ENCODE measurements at regions of chr10 and their contacts with region 1.

Region 1: DNA sequence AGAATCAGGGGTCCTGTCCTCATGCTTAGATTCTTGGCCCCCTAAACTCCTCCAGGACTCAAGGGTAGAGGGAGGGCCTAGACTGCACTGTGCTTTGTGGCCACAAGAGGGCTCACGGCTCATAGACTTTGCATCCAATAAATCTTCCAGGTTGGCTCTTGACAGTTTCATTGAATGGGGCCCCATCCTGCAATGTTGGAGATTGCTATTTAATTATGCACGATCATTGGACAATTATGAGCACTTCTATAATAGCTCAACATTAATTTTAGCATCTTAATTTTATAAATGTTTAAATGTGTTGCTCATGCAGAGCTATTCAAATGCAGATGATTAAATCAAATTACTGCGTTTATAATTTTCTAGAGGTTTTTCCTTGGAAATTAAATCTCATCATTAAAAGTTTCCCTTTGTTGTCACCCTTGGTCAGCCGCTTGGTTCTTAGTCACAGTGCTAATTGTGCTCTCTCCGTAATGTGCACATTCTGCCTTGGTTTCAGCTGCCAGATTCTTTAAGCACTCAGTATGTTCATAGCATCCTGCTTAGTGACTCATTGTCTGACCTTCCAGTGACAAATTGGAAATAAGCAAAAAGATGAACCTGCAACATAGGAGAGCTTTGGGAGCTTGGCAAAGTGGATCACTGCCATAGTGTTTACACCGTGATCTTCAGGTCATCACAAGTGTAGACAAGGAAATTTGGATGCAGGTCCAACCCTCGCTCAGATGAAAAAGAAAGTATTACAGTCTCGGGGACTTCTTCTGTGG is 33.4 kb upstream of the PLPP4 start:
- DNase-seq: no peak
- H3K4me3 ChIP-seq: no peak overlapping the region
- H3K27me3 ChIP-seq: no peaks in the 10 kb centered on the region
- CTCF ChIP-seq: peak; percentile 87

Region 2: DNA sequence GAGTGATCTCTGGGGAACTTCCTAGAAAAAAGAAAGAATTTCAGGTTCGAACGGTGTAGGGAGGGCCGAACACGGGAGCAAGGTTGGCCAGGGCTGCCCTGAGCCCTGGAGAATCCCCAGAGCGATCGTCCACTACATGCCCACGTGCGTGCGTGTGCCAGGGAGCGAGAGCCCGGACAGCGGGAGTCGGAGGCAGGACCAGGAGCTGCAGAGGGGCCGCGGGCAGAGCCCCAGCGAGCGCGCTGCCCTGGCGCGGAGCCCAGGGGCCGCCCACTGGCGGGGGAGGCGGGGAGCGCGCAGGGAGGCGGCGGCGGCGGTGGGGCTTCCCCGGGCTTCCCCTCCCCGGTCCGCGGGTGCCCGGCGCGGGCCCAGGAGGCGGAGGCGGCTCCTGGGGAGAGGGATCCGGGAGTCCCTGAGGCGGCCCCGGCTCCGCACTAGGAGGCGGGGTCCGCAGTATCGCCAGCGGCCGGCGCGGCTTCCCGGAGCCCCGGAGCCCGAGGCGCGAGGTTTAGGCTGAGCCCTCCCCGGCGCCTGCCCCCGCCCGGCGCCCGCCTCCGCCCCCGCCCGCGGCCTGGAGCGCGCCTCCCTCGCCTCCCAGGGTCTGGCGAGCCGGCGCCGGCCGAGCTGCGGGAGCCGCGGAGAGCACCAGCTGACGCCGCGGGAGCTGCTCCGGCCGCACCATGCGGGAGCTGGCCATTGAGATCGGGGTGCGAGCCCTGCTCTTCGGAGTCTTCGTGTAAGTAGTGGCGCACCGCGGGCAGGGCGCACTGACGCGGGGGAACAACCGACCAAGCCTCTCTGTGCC is 33.2 kb after region 1 on chr10 and contains the start of gene PLPP4:
- CTCF ChIA-PET with region 1: interaction called, 11 read pairs
- POLR2A ChIA-PET with region 1: no interaction called
- DNase-seq: no peak
- H3K4me3 ChIP-seq: peak within 1 kb of the TSS; percentile 53
- H3K27me3 ChIP-seq: no peaks in the 10 kb centered on the region
- CTCF ChIP-seq: no peak
- polyA plus RNA-seq, gene PLPP4: 30.1 and 35.4 TPM in 2 replicates

Region 3: DNA sequence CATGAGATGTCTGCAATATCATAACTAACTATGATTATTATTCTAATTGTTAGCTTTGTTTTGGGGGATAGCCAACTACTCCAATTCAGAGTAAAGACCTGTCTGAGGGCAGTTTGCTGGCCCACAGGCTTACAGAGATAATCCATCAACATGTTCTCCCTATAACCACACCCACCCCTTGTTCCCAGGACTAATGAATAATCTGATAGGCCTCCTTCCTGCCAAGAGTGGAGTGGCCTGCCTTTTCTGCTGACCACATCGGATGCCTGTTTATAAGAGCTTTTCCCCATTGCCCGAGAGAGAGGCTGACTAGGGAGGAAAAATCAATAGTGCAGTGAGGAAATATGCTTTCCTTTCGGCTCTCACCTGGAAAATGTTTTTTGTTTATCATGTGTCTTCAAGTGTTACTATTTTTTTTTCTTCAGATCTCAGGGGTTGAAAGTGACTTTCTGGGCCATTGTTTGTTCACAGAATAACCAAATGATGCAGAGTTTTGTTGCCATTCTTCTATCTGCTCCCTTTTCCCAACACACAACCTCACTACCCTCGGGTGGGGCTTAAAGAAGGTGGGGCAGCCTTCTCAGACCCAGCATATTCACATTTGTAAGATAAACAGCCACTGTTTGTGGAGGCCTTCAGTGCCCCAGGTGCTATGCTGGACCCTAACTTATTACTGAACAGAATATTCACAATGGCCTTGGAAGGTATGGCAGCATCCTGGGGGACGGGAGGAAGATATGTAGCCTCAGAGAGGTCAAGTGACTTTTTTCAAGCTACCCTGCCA is 71.8 kb after region 1 on chr10:
- CTCF ChIA-PET with region 1: no interaction called
- POLR2A ChIA-PET with region 1: no interaction called
- DNase-seq: no peak
- H3K4me3 ChIP-seq: no peak overlapping the region
- H3K27me3 ChIP-seq: no peaks in the 10 kb centered on the region
- CTCF ChIP-seq: no peak

Region 4: GRCh38 chr10:120735773-120736371 is 312.3 kb after region 1 on chr10:
- CTCF ChIA-PET with region 1: interaction called, 17 read pairs
- POLR2A ChIA-PET with region 1: no interaction called
- DNase-seq: no peak
- H3K4me3 ChIP-seq: no peak overlapping the region
- H3K27me3 ChIP-seq: no peaks in the 10 kb centered on the region
- CTCF ChIP-seq: peak; percentile 63

Measured in BJ (cell line).